T-cell (primary cell): ENCODE measurements at regions of chr9 and their contacts with region 1.

Region 1: GRCh38 chr9:133149126-133150107 is 14.3 kb downstream of the GBGT1 start:
- DNase-seq: peak; percentile 42 to 90 (median 64)
- ATAC-seq: peak; percentile 58 to 65 (median 62)
- H3K4me3 ChIP-seq: peak overlapping the region; percentile 44 to 88
- H3K4me3 Mint-ChIP-seq: peak overlapping the region; percentile 74 to 79 (median 76)
- H3K27ac ChIP-seq: peak overlapping the region; percentile 80
- H3K27ac Mint-ChIP-seq: peak overlapping the region; percentile 69 to 72
- H3K4me1 ChIP-seq: peaks cover 14 to 45% of the 10 kb centered on the region in 2 experiments
- H3K4me1 Mint-ChIP-seq: peaks cover 37 to 41% (median 37%) of the 10 kb centered on the region in 3 donors
- H3K27me3 ChIP-seq: no peaks in the 10 kb centered on the region
- H3K27me3 Mint-ChIP-seq: no peaks in the 10 kb centered on the region

Region 2: GRCh38 chr9:133030317-133031129 is 118.9 kb before region 1 on chr9 and contains the start of gene GTF3C5:
- CTCF ChIA-PET with region 1: interaction called in 1 of 2 experiments, 14 read pairs
- POLR2A ChIA-PET with region 1: interaction called in 1 of 2 experiments, 7 read pairs
- DNase-seq: peak; percentile 82 to 96 (median 92)
- ATAC-seq: peak; percentile 96 to 97 (median 96)
- H3K4me3 ChIP-seq: peak within 1 kb of the TSS; percentile 86 to 87
- H3K4me3 Mint-ChIP-seq: peak within 1 kb of the TSS; percentile 90 to 99 (median 97)
- H3K27ac ChIP-seq: peak within 1 kb of the TSS; percentile 84
- H3K27ac Mint-ChIP-seq: peak within 1 kb of the TSS; percentile 99
- H3K4me1 ChIP-seq: peaks cover 14 to 31% of the 10 kb centered on the region in 2 experiments
- H3K4me1 Mint-ChIP-seq: peaks cover 41 to 68% (median 60%) of the 10 kb centered on the region in 3 donors
- H3K27me3 ChIP-seq: no peaks in the 10 kb centered on the region
- H3K27me3 Mint-ChIP-seq: no peaks in the 10 kb centered on the region
- total RNA-seq, gene GTF3C5: 46.6 to 91.2 (median 80.0) TPM

Region 3: GRCh38 chr9:133133681-133134418 is 15.6 kb before region 1 on chr9:
- CTCF ChIA-PET with region 1: interaction called, 4 to 45 read pairs
- POLR2A ChIA-PET with region 1: interaction called, 16 to 17 read pairs
- DNase-seq: peak; percentile 64 to 96 (median 90)
- ATAC-seq: peak; percentile 87 to 89 (median 88)
- H3K4me3 ChIP-seq: peak overlapping the region; percentile 7 to 18
- H3K4me3 Mint-ChIP-seq: peak overlapping the region; percentile 64 to 83 (median 80)
- H3K27ac ChIP-seq: peak overlapping the region; percentile 100
- H3K27ac Mint-ChIP-seq: peak overlapping the region; percentile 100
- H3K4me1 ChIP-seq: peaks cover 31 to 98% of the 10 kb centered on the region in 2 experiments
- H3K4me1 Mint-ChIP-seq: peaks cover 65 to 86% (median 71%) of the 10 kb centered on the region in 3 donors
- H3K27me3 ChIP-seq: no peaks in the 10 kb centered on the region
- H3K27me3 Mint-ChIP-seq: no peaks in the 10 kb centered on the region